ENCODE measurements at regions of chr14 and their contacts with region 1.

Region 1: DNA sequence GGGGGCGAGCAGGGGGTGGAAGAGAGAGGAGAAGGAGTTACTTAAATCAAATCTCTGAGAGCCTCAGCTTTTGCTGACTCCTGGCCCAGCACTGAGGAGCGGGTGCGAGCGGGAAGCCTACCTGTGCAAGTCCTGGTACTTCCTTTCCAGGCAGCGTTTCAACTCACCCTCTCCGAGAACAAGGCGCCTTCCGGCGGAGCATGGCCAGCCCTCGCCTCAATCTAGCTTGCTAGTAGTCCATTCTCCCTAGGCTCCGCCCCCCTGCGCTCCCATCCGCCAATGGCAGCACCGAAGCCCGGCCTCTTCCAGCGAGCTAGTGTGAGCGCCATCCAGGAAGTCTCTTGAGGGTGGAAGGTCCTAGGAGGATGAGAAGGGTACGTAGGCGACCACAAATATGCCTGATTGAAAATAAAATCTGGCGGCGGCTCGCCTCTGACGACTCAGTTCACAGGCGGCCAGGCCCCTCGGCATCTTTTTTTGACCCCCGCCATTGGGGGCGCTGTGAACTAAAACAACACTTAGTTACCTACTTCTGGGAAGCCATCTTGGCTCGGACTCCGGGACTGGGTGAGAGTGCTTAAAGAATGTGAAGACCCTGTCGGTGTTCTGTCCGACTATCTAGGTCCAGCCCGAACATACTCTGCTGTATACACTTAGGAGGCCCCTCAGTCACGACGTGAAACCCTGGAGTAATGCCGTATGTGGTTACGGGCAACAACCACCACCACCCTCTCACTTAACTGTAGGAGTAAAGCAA is at the start of gene CHD8:
- DNase-seq: peak; percentile 99
- H3K4me3 ChIP-seq: peak within 1 kb of the TSS; percentile 93
- H3K27ac ChIP-seq: peak within 1 kb of the TSS; percentile 96
- H3K27me3 ChIP-seq: no peaks in the 10 kb centered on the region
- CTCF ChIP-seq: peak; percentile 66
- polyA plus RNA-seq, gene CHD8: 26.1 and 40.3 TPM in 2 replicates

Region 2: DNA sequence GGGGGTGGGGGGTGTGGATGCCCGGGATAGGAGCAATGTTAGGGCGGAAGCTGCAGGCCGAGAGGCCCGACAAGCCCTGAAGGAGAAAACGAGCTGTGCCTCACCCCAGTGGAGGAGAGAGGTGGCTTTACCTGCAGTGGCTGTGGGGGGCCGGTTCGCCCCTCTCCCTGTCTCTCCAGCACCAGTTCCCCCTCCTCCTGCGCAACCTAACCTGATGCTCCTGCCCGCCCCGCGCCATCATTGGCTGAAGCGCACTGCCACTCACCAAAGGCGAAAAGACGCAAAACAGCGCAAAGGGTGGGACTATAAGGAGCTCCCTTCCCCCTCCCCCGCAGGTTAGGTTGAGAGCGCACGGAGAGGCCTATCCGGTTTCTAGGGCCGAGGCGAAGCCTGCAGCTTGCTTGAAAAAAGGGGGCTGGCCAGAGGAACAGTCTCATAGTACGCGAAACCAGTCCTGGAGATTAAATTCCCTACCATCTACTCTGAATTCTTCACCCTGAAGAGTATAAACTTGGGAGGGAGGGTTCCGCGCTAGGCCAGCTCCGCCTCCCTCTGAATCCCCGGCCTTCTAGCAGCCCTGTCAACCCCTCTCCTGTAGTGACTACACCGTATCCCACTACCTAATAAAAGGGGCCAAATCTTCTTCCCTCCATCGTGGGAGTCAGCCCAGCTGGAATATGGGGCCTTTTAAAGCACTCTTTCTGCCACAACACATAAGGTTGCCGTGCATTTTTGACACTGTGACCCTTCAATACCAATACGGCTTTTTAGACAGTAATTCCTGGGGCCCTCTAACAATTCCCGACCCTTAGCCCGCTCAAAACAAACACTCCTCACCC is 18.8 kb before region 1 on chr14:
- CTCF ChIA-PET with region 1: interaction called, 23 read pairs
- POLR2A ChIA-PET with region 1: interaction called, 35 read pairs
- DNase-seq: peak; percentile 99
- H3K4me3 ChIP-seq: peak overlapping the region; percentile 93
- H3K27ac ChIP-seq: peak overlapping the region; percentile 88
- H3K27me3 ChIP-seq: no peaks in the 10 kb centered on the region
- CTCF ChIP-seq: no peak

Region 3: GRCh38 chr14:21467616-21468015 is 11.5 kb after region 1 on chr14:
- CTCF ChIA-PET with region 1: interaction called, 31 read pairs
- POLR2A ChIA-PET with region 1: interaction called, 4 read pairs
- DNase-seq: peak; percentile 92
- H3K4me3 ChIP-seq: no peak overlapping the region
- H3K27ac ChIP-seq: no peak overlapping the region
- H3K27me3 ChIP-seq: no peaks in the 10 kb centered on the region
- CTCF ChIP-seq: no peak

Region 4: GRCh38 chr14:21476925-21477681 is 21.0 kb after region 1 on chr14 and contains the starts of genes RAB2B and TOX4:
- CTCF ChIA-PET with region 1: interaction called, 32 read pairs
- POLR2A ChIA-PET with region 1: interaction called, 4 read pairs
- DNase-seq: peak; percentile 97
- H3K4me3 ChIP-seq: peak within 1 kb of the TSS; percentile 97
- H3K27ac ChIP-seq: peak within 1 kb of the TSS; percentile 71
- H3K27me3 ChIP-seq: no peaks in the 10 kb centered on the region
- CTCF ChIP-seq: peak; percentile 99
- polyA plus RNA-seq, gene RAB2B: 32.6 and 36.7 TPM in 2 replicates
- polyA plus RNA-seq, gene TOX4: 93.7 and 94.6 TPM in 2 replicates

Region 5: GRCh38 chr14:21589317-21589716 is 133.2 kb after region 1 on chr14:
- CTCF ChIA-PET with region 1: no interaction called
- POLR2A ChIA-PET with region 1: no interaction called
- DNase-seq: no peak
- H3K4me3 ChIP-seq: no peak overlapping the region
- H3K27ac ChIP-seq: no peak overlapping the region
- H3K27me3 ChIP-seq: no peaks in the 10 kb centered on the region
- CTCF ChIP-seq: no peak

Measured in AG04450 (cell line).